GM12878 (cell line): ENCODE measurements at regions of chr1 and their contacts with region 1.

Region 1: DNA sequence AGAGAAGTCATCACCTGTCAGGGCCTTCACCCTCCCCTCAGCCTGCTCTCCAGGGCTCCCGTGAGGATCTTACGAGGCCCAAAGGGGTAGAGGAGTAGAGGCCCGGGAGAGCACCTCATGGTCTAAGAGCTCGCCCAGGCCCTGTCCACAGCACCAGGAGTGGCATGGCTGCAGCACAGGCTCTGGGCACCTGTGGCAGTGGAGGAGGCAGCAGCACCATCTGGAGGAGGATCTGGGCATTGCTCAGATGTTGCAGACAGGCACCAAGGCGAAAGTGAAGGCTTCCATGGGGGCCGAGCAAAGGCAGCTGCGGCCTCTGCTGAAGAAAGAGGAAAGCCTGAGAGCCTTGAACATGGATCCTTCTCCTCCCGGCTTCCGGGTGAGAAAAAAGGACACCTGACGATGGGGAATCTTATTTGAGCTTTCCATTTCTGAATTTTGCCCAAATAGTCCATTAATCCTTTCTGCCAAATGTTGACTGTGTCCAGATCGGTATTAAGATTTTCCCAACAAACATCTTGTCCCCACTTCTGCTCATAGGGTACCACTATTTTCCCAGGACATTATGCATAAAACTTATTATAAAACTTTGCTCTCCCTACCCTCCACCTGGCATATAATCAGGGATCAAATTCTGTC is 604.7 kb downstream of the PTPRC start:
- DNase-seq: peak; percentile 67
- ATAC-seq: peak; percentile 100
- H3K4me3 ChIP-seq: no peak overlapping the region
- H3K27ac ChIP-seq: no peak overlapping the region
- H3K4me1 ChIP-seq: peaks cover 11% of the 10 kb centered on the region
- H3K27me3 ChIP-seq: no peaks in the 10 kb centered on the region
- CTCF ChIP-seq: peak; percentile 91 to 94 (median 93)
- EP300 ChIP-seq: no peak
- POLR2A ChIP-seq: no peak
- RAD21 ChIP-seq: peak; percentile 96

Region 2: DNA sequence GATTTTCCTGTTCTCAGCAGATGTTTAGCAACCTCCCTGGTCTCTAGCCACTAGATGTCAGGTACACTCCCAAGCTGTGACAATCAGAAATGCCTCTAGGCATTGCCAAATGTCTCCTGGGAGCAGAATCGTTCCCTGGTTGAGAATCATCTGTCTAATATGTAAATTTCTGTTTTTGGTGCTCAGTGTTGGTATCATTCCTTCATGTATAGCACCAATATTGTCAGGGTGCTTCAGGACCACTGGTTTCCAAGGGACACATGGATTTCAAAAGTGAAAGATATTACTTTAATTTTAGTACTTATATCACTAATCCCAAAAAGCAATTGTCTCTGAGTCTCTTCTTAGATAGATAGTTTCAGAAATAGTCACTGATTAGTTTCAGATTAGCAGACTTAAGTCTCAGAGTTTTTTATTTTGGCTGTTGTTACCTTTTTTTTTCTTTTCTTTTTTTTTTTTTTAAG is 444.6 kb before region 1 on chr1:
- CTCF ChIA-PET with region 1: interaction called, 9 read pairs
- POLR2A ChIA-PET with region 1: no interaction called
- RAD21 ChIA-PET with region 1: interaction called, 6 read pairs
- SMC1A ChIA-PET with region 1: interaction called, 11 read pairs
- in situ Hi-C with region 1: no loop called
- intact Hi-C with region 1: no loop called
- DNase-seq: peak; percentile 57
- ATAC-seq: peak; percentile 86
- H3K4me3 ChIP-seq: no peak overlapping the region
- H3K27ac ChIP-seq: no peak overlapping the region
- H3K4me1 ChIP-seq: no peaks in the 10 kb centered on the region
- H3K27me3 ChIP-seq: no peaks in the 10 kb centered on the region
- CTCF ChIP-seq: peak in 1 of 3 experiments; percentile 28; a peak in 1 of 6 replicates
- EP300 ChIP-seq: peak; percentile 18 to 25; a peak in 1 of 4 replicates
- POLR2A ChIP-seq: no peak
- RAD21 ChIP-seq: peak; percentile 27; the same call in 1 of the 2 replicates

Region 3: GRCh38 chr1:198929961-198930599 is 313.5 kb before region 1 on chr1:
- CTCF ChIA-PET with region 1: interaction called, 41 read pairs
- POLR2A ChIA-PET with region 1: no interaction called
- RAD21 ChIA-PET with region 1: interaction called, 52 read pairs
- SMC1A ChIA-PET with region 1: interaction called, 5 read pairs
- in situ Hi-C with region 1: no loop called
- intact Hi-C with region 1: loop called (anchors 2 kb)
- DNase-seq: peak; percentile 45
- ATAC-seq: peak; percentile 69
- H3K4me3 ChIP-seq: peak overlapping the region; percentile 59
- H3K27ac ChIP-seq: peak overlapping the region; percentile 76
- H3K4me1 ChIP-seq: peaks cover 2% of the 10 kb centered on the region; the same call in 1 of the 2 replicates
- H3K27me3 ChIP-seq: no peaks in the 10 kb centered on the region
- CTCF ChIP-seq: no peak
- EP300 ChIP-seq: no peak
- POLR2A ChIP-seq: no peak
- RAD21 ChIP-seq: no peak

Region 4: DNA sequence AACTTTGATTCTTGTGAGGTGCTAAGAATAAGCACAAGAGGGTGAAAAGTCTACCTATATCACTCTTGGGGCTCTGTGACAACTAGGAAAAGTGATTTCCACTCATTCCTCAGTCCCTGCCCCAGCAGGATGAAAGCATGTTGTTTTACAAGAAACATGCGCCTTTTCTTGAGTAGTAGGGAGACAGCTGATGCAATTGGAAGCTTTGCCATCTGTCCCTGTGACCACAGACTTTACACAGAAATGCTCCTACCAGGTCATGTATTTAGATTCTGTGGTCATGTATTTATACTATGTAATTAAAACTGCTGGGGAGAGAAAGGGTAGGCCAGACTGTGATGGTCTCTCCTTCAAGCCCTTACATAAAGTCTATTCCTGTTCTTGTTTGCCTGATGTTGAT is 159.2 kb before region 1 on chr1:
- CTCF ChIA-PET with region 1: interaction called, 12 read pairs
- POLR2A ChIA-PET with region 1: no interaction called
- RAD21 ChIA-PET with region 1: interaction called, 25 read pairs
- SMC1A ChIA-PET with region 1: interaction called, 21 read pairs
- in situ Hi-C with region 1: no loop called
- intact Hi-C with region 1: no loop called
- DNase-seq: no peak
- ATAC-seq: no peak
- H3K4me3 ChIP-seq: no peak overlapping the region
- H3K27ac ChIP-seq: no peak overlapping the region
- H3K4me1 ChIP-seq: peaks cover 13% of the 10 kb centered on the region
- H3K27me3 ChIP-seq: no peaks in the 10 kb centered on the region
- CTCF ChIP-seq: no peak
- EP300 ChIP-seq: no peak
- POLR2A ChIP-seq: no peak
- RAD21 ChIP-seq: no peak

Region 5: GRCh38 chr1:199163670-199164069 is 79.9 kb before region 1 on chr1:
- CTCF ChIA-PET with region 1: interaction called, 9 read pairs
- POLR2A ChIA-PET with region 1: no interaction called
- RAD21 ChIA-PET with region 1: interaction called, 11 read pairs
- SMC1A ChIA-PET with region 1: interaction called, 16 read pairs
- in situ Hi-C with region 1: no loop called
- intact Hi-C with region 1: no loop called
- DNase-seq: no peak
- ATAC-seq: peak; percentile 67
- H3K4me3 ChIP-seq: no peak overlapping the region
- H3K27ac ChIP-seq: no peak overlapping the region
- H3K4me1 ChIP-seq: peaks cover 9% of the 10 kb centered on the region; the same call in 1 of the 2 replicates
- H3K27me3 ChIP-seq: no peaks in the 10 kb centered on the region
- CTCF ChIP-seq: no peak
- EP300 ChIP-seq: no peak
- POLR2A ChIP-seq: no peak
- RAD21 ChIP-seq: no peak

Region 6: GRCh38 chr1:199463521-199464128 is 220.1 kb after region 1 on chr1:
- CTCF ChIA-PET with region 1: interaction called, 20 read pairs
- POLR2A ChIA-PET with region 1: no interaction called
- RAD21 ChIA-PET with region 1: interaction called, 10 read pairs
- SMC1A ChIA-PET with region 1: interaction called, 9 read pairs
- in situ Hi-C with region 1: no loop called
- intact Hi-C with region 1: loop called (anchors 1 kb)
- DNase-seq: peak; percentile 24
- ATAC-seq: peak; percentile 98
- H3K4me3 ChIP-seq: no peak overlapping the region
- H3K27ac ChIP-seq: no peak overlapping the region
- H3K4me1 ChIP-seq: no peaks in the 10 kb centered on the region
- H3K27me3 ChIP-seq: no peaks in the 10 kb centered on the region
- CTCF ChIP-seq: peak; percentile 55 to 67 (median 57)
- EP300 ChIP-seq: no peak
- POLR2A ChIP-seq: no peak
- RAD21 ChIP-seq: peak; percentile 86